ENCODE measurements at regions of chr17 and their contacts with region 1.

Region 1: GRCh38 chr17:41688699-41689496 is at the start of gene EIF1:
- DNase-seq: peak; percentile 96 to 100 (median 100)
- ATAC-seq: peak; percentile 59 to 75
- H3K4me3 Mint-ChIP-seq: peak within 1 kb of the TSS; percentile 90 to 99 (median 96)
- H3K27ac Mint-ChIP-seq: peak within 1 kb of the TSS; percentile 97 to 100 (median 99)
- H3K4me1 Mint-ChIP-seq: peaks cover 26 to 47% (median 45%) of the 10 kb centered on the region in 4 donors
- H3K27me3 Mint-ChIP-seq: no peaks in the 10 kb centered on the region
- polyA plus RNA-seq, gene EIF1: 1,100 to 1,335 (median 1,160) TPM

Region 2: DNA sequence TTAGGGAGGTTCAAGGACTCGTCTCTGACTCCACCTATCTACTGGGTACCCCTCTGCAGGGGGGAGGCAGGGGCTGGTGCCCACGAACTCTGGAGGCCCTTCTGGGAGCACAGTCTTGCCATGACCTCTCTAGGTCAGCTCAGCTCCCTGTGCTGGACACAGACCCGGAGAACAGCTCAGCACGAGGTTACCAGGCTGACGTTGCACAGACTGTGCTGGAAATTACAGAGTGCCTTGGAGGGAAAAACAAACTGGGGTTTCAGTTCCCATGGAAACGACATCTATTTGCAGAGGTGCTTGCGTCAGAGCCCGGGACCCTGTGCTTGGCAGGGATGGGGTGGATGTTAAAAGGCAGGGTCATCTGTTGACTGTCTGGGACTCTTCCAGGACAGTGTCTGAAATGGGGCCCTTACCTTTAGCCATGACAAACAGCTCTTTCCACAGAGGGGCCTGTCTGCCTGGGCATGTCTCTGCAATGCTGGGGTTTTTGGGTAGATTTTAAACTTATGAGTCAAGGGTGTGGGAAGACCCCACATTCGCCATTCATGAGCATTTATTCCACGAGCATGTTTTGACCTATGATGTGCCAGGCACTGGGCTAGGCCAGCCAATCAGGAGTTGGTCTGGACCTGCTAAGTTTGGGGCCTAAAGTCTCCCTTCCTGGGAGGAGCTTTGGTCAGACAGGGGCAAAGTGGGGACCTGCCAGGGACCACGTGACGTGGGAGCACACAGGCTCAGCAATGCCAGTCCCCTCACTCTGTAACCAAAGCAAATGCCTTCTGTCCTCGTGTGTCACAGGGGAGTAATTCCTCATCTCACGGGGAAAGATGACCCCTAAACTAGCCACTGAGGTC is 1146.1 kb before region 1 on chr17:
- POLR2A ChIA-PET with region 1: interaction called, 11 read pairs
- DNase-seq: peak in 3 of 10 donors; percentile 12 to 64 (median 47)
- ATAC-seq: no peak
- H3K4me3 Mint-ChIP-seq: peak overlapping the region; percentile 49 to 91 (median 77)
- H3K27ac Mint-ChIP-seq: peak overlapping the region; percentile 90 to 99 (median 96)
- H3K4me1 Mint-ChIP-seq: peaks cover 51 to 93% (median 87%) of the 10 kb centered on the region in 4 donors
- H3K27me3 Mint-ChIP-seq: peaks cover 0 to 2% (median 0%) of the 10 kb centered on the region in 5 donors

Region 3: GRCh38 chr17:41308251-41308917 is 380.5 kb before region 1 on chr17:
- POLR2A ChIA-PET with region 1: interaction called, 16 read pairs
- DNase-seq: peak; percentile 56 to 95 (median 86)
- ATAC-seq: peak; percentile 85
- H3K4me3 Mint-ChIP-seq: peak overlapping the region; percentile 73 to 84 (median 80)
- H3K27ac Mint-ChIP-seq: peak overlapping the region; percentile 96 to 100 (median 99)
- H3K4me1 Mint-ChIP-seq: peaks cover 49 to 70% (median 68%) of the 10 kb centered on the region in 4 donors
- H3K27me3 Mint-ChIP-seq: no peaks in the 10 kb centered on the region

Region 4: GRCh38 chr17:41579484-41580243 is 109.2 kb before region 1 on chr17:
- POLR2A ChIA-PET with region 1: no interaction called
- DNase-seq: peak; percentile 14 to 70 (median 33)
- ATAC-seq: peak; percentile 61 to 73
- H3K4me3 Mint-ChIP-seq: no peak overlapping the region
- H3K27ac Mint-ChIP-seq: peak overlapping the region in 1 of 10 donors; percentile 47
- H3K4me1 Mint-ChIP-seq: peaks cover 0 to 6% (median 0%) of the 10 kb centered on the region in 4 donors
- H3K27me3 Mint-ChIP-seq: peaks cover 18 to 97% (median 59%) of the 10 kb centered on the region in 5 donors

Region 5: GRCh38 chr17:41613277-41614082 is 75.4 kb before region 1 on chr17:
- POLR2A ChIA-PET with region 1: no interaction called
- DNase-seq: peak in 1 of 10 donors; percentile 28
- ATAC-seq: no peak
- H3K4me3 Mint-ChIP-seq: no peak overlapping the region
- H3K27ac Mint-ChIP-seq: no peak overlapping the region
- H3K4me1 Mint-ChIP-seq: peaks cover 0 to 1% (median 0%) of the 10 kb centered on the region in 4 donors
- H3K27me3 Mint-ChIP-seq: peaks cover 5 to 33% (median 18%) of the 10 kb centered on the region in 5 donors

Region 6: GRCh38 chr17:41624208-41625101 is 64.4 kb before region 1 on chr17 and contains the start of gene KRT17:
- POLR2A ChIA-PET with region 1: no interaction called
- DNase-seq: peak in 1 of 10 donors; percentile 31
- ATAC-seq: no peak
- H3K4me3 Mint-ChIP-seq: no peak within 1 kb of the TSS
- H3K27ac Mint-ChIP-seq: no peak within 1 kb of the TSS
- H3K4me1 Mint-ChIP-seq: peaks cover 0 to 1% (median 0%) of the 10 kb centered on the region in 4 donors
- H3K27me3 Mint-ChIP-seq: peaks cover 0 to 19% (median 3%) of the 10 kb centered on the region in 5 donors
- polyA plus RNA-seq, gene KRT17: not detected

Region 7: GRCh38 chr17:41665566-41666236 is 23.2 kb before region 1 on chr17:
- POLR2A ChIA-PET with region 1: interaction called, 181 read pairs
- DNase-seq: peak; percentile 79 to 95 (median 90)
- ATAC-seq: peak; percentile 82 to 87
- H3K4me3 Mint-ChIP-seq: peak overlapping the region; percentile 87 to 98 (median 93)
- H3K27ac Mint-ChIP-seq: peak overlapping the region; percentile 89 to 100 (median 96)
- H3K4me1 Mint-ChIP-seq: peaks cover 11 to 30% (median 22%) of the 10 kb centered on the region in 4 donors
- H3K27me3 Mint-ChIP-seq: no peaks in the 10 kb centered on the region

Region 8: DNA sequence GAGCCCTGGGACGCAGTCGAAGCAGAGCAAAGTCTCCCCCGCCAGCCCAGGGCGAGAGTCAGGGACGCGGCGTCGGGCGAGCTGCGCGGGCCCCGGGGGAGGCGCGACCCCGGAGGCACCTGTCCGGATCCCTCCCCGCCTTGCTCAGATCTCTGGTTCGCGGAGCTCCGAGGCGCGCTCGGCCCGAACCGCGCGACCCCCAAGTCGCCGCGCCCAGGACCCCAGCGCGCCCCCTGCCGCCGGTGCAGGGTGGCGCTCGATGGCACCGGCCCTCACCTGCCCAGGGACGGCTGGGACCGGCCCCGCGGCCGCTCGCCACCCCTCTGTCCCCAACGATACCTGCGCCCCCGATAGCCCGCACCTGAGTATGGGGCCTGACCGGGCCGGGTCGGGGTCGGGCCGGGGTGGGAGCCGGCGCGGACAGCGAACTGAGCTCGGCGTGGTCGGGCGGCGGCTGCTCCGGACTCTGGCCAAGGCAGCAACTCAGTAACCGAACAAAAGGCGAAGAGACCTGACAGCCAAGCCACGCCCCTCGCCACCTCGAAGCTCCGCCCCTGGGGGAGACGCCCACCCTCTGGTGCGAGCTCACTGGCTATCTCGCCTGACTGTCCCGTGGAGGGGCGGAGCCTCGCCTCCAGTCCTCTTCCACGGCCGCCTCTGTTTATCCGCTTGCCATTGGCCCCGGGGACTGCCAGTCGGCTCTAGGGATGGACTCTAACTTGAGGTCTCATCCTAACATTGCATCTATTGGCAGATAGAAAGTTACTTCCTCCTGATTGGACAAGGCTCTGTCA is 97.5 kb after region 1 on chr17 and contains the start of gene JUP:
- POLR2A ChIA-PET with region 1: interaction called, 15 read pairs
- DNase-seq: peak; percentile 73 to 93 (median 88)
- ATAC-seq: peak; percentile 90 to 93
- H3K4me3 Mint-ChIP-seq: peak within 1 kb of the TSS; percentile 67 to 89 (median 82)
- H3K27ac Mint-ChIP-seq: peak within 1 kb of the TSS in 5 of 10 donors; percentile 8 to 75 (median 43)
- H3K4me1 Mint-ChIP-seq: peaks cover 10 to 54% (median 46%) of the 10 kb centered on the region in 4 donors
- H3K27me3 Mint-ChIP-seq: peaks cover 5 to 34% (median 14%) of the 10 kb centered on the region in 5 donors
- polyA plus RNA-seq, gene JUP: 0.14 to 0.55 (median 0.30) TPM

Region 9: GRCh38 chr17:41864836-41865595 is 176.1 kb after region 1 on chr17 and contains the start of gene KLHL11:
- POLR2A ChIA-PET with region 1: interaction called, 17 read pairs
- DNase-seq: peak; percentile 79 to 91 (median 84)
- ATAC-seq: peak; percentile 90
- H3K4me3 Mint-ChIP-seq: no peak within 1 kb of the TSS
- H3K27ac Mint-ChIP-seq: peak within 1 kb of the TSS in 4 of 10 donors; percentile 49 to 91 (median 90)
- H3K4me1 Mint-ChIP-seq: peaks cover 13 to 26% (median 22%) of the 10 kb centered on the region in 4 donors
- H3K27me3 Mint-ChIP-seq: no peaks in the 10 kb centered on the region
- polyA plus RNA-seq, gene KLHL11: 5.0 to 6.3 (median 5.4) TPM

Region 10: GRCh38 chr17:41896726-41897125 is 207.8 kb after region 1 on chr17:
- POLR2A ChIA-PET with region 1: no interaction called
- DNase-seq: no peak
- ATAC-seq: no peak
- H3K4me3 Mint-ChIP-seq: no peak overlapping the region
- H3K27ac Mint-ChIP-seq: peak overlapping the region in 1 of 10 donors; percentile 34
- H3K4me1 Mint-ChIP-seq: peaks cover 0 to 6% (median under 1%) of the 10 kb centered on the region in 4 donors
- H3K27me3 Mint-ChIP-seq: no peaks in the 10 kb centered on the region